ENCODE measurements at regions of chr1 and their contacts with region 1.

Region 1: DNA sequence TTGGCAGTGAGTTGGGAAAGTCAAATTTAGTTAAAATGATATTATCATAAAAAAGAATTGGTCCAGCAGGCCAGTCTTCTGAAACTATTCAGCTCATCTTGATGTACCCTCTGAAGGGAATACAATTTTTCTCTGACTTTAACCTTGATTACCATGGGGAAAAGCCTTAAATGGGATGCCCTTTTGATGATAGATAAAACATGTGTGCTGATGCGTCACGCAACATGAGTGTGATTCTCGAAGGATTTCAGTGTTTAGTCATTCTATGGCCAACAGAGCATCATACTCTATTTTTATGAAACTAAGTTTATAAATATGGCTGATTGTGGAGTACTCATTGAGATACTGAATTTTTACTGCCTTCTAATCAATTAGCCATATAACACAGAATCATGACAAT is 171.5 kb downstream of the ZNF281 start:
- DNase-seq: no peak
- H3K4me3 ChIP-seq: no peak overlapping the region
- H3K27ac ChIP-seq: no peak overlapping the region
- H3K4me1 ChIP-seq: no peaks in the 10 kb centered on the region
- H3K27me3 ChIP-seq: peaks cover 3% of the 10 kb centered on the region
- CTCF ChIP-seq: no peak

Region 2: GRCh38 chr1:200154069-200154767 is 84.1 kb before region 1 on chr1:
- CTCF ChIA-PET with region 1: no interaction called
- dilution Hi-C with region 1: loop called (anchors 5 kb)
- in situ Hi-C with region 1: no loop called
- intact Hi-C with region 1: no loop called
- DNase-seq: peak; percentile 23
- H3K4me3 ChIP-seq: no peak overlapping the region
- H3K27ac ChIP-seq: no peak overlapping the region
- H3K4me1 ChIP-seq: peaks cover 18% of the 10 kb centered on the region
- H3K27me3 ChIP-seq: no peaks in the 10 kb centered on the region
- CTCF ChIP-seq: no peak

Region 3: GRCh38 chr1:200550367-200550766 is 312.1 kb after region 1 on chr1:
- CTCF ChIA-PET with region 1: no interaction called
- dilution Hi-C with region 1: no loop called
- in situ Hi-C with region 1: no loop called
- intact Hi-C with region 1: no loop called
- DNase-seq: peak; percentile 66
- H3K4me3 ChIP-seq: no peak overlapping the region
- H3K27ac ChIP-seq: no peak overlapping the region
- H3K4me1 ChIP-seq: peaks cover 15% of the 10 kb centered on the region
- H3K27me3 ChIP-seq: no peaks in the 10 kb centered on the region
- CTCF ChIP-seq: no peak